CD4-positive, alpha-beta T cell (primary cell): ENCODE measurements at regions of chr9 and their contacts with region 1.

Region 1: DNA sequence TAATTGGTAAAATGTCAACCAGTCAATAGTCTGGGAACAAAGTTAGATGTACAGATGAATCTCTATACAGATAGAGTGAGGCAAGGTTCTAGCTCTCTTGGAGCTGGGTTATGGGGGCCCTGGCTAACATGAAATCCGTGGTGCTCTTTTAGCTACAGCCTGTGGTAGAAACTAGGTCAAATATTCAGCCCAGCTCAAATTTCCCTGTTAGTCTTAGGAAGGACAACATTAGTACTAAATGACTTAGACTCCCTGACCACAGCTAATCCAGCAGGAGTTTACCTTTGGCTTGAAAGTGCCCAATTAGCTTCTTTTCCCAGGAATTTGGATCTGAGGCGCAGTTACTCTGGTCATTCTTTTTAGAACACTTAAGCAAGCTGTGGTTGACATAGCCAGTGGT is 170.5 kb downstream of the DMRTA1 start:
- DNase-seq: no peak
- ATAC-seq: no peak
- H3K4me3 ChIP-seq: no peak overlapping the region
- H3K4me3 Mint-ChIP-seq: no peak overlapping the region
- H3K27ac ChIP-seq: no peak overlapping the region
- H3K27ac Mint-ChIP-seq: no peak overlapping the region
- H3K4me1 ChIP-seq: no peaks in the 10 kb centered on the region
- H3K4me1 Mint-ChIP-seq: no peaks in the 10 kb centered on the region
- H3K27me3 ChIP-seq: no peaks in the 10 kb centered on the region
- H3K27me3 Mint-ChIP-seq: no peaks in the 10 kb centered on the region
- CTCF ChIP-seq: no peak

Region 2: DNA sequence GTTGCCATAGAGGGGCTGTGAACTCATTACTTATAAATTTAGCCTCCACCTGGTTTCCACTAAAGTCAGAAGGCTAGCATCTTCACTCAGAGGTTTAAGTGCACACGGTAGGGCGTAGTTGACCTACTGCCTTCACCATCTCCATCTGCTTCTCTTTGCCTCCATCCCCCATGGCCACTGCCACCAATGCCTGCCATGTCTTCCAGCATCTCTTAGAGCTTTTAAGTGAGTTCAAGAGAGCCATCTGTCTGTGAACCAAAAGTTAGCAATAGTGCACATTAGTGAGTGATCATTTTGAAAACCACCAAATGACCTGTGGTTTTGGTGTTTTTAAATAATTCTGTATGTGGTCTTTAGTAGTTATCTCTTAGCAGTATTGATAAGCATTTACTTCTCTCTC is 68.5 kb before region 1 on chr9:
- CTCF ChIA-PET with region 1: no interaction called
- POLR2A ChIA-PET with region 1: no interaction called
- intact Hi-C with region 1: loop called in 1 of 2 experiments (anchors 10 kb)
- DNase-seq: no peak
- ATAC-seq: no peak
- H3K4me3 ChIP-seq: no peak overlapping the region
- H3K4me3 Mint-ChIP-seq: no peak overlapping the region
- H3K27ac ChIP-seq: no peak overlapping the region
- H3K27ac Mint-ChIP-seq: no peak overlapping the region
- H3K4me1 ChIP-seq: no peaks in the 10 kb centered on the region
- H3K4me1 Mint-ChIP-seq: no peaks in the 10 kb centered on the region
- H3K27me3 ChIP-seq: no peaks in the 10 kb centered on the region
- H3K27me3 Mint-ChIP-seq: no peaks in the 10 kb centered on the region
- CTCF ChIP-seq: no peak

Region 3: DNA sequence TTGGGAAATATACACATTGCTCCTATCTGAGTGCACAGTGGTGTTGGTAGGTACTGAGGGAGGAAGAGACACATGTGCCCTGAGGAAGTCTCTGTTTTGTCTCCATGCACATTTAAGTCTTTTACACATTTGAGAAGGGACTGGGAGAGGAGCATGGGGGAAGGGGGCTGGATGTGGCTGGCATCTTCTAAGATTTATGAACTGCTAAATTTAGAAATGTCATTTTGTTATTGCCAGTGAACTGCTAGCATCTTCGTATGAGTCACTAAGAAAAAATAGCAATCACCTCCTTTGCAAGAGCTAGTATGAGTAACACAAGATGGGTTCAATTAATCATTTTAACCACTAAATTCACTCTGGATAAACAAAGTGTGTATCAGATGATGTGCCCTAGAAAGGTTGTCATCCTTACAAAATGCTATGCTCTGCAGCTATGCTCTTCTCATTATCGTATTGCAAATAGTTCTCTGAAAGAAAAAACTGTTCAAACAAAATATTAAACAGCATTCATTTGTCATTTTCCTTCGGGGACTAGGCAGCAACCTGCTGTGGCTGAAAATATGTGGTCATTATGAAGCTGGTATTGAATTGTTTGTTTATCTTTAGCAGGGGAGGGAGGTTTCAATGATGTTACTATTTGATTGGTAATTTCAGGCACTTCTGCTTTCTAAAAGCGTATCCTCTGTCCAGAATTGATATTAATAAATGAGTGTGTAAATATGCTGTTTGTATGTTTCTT is 66.0 kb after region 1 on chr9:
- CTCF ChIA-PET with region 1: no interaction called
- POLR2A ChIA-PET with region 1: no interaction called
- intact Hi-C with region 1: loop called in 1 of 2 experiments (anchors 10 kb)
- DNase-seq: no peak
- ATAC-seq: no peak
- H3K4me3 ChIP-seq: no peak overlapping the region
- H3K4me3 Mint-ChIP-seq: no peak overlapping the region
- H3K27ac ChIP-seq: no peak overlapping the region
- H3K27ac Mint-ChIP-seq: no peak overlapping the region
- H3K4me1 ChIP-seq: no peaks in the 10 kb centered on the region
- H3K4me1 Mint-ChIP-seq: no peaks in the 10 kb centered on the region
- H3K27me3 ChIP-seq: no peaks in the 10 kb centered on the region
- H3K27me3 Mint-ChIP-seq: no peaks in the 10 kb centered on the region
- CTCF ChIP-seq: no peak